H1 (cell line): ENCODE measurements at regions of chr9 and their contacts with region 1.

Region 1: DNA sequence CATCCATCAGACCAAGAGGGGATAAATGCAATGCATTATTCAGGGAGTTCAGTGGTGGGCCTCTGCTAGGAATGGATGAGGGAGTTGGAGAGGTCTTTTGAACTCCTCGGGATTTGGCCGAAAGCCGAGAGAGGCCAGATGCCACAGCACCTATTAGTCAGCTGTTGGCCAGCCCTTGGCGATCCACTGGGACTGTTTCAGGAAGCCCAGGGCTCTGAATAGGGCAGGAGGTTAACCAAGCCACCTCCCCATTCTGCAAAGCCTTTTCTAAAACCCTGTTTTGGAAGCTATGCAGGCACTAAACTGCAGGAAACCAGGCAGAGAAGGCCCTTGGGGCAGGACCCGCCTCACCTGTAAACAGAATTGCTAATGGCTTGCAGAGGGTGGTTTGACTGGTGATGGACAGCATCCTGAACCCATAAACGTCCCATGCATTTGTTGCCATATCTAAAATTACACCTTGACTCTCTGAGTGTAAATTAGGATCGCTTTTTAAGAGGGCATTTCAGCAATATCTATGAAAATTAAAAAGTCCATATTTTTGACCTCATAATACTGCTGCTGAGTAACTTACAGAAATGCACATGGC is 37.7 kb downstream of the ASTN2 start:
- DNase-seq: no peak
- H3K4me3 ChIP-seq: no peak overlapping the region
- H3K27ac ChIP-seq: no peak overlapping the region
- H3K4me1 ChIP-seq: peaks cover under 1 to 8% (median 6%) of the 10 kb centered on the region in 4 experiments; a peak in 3 of 7 replicates
- H3K27me3 ChIP-seq: no peaks in the 10 kb centered on the region
- CTCF ChIP-seq: no peak
- EP300 ChIP-seq: no peak
- POLR2A ChIP-seq: no peak
- RAD21 ChIP-seq: no peak

Region 2: GRCh38 chr9:117392992-117393391 is 15.9 kb after region 1 on chr9:
- CTCF ChIA-PET with region 1: interaction called, 17 read pairs
- POLR2A ChIA-PET with region 1: no interaction called
- DNase-seq: no peak
- H3K4me3 ChIP-seq: no peak overlapping the region
- H3K27ac ChIP-seq: no peak overlapping the region
- H3K4me1 ChIP-seq: peaks cover 0 to 14% (median 3%) of the 10 kb centered on the region in 4 experiments; a peak in 4 of 7 replicates
- H3K27me3 ChIP-seq: no peaks in the 10 kb centered on the region
- CTCF ChIP-seq: peak; percentile 62 to 74 (median 71)
- EP300 ChIP-seq: no peak
- POLR2A ChIP-seq: no peak
- RAD21 ChIP-seq: peak; percentile 42 to 57